Right ventricle myocardium superior (tissue), 1 donor: ENCODE measurements at regions of chr14 and their contacts with region 1.

Region 1: GRCh38 chr14:104985675-104986525 is at the start of gene CLBA1:
- DNase-seq: peak; percentile 93
- ATAC-seq: peak; percentile 99
- total RNA-seq, gene CLBA1: 1.5 TPM

Region 2: DNA sequence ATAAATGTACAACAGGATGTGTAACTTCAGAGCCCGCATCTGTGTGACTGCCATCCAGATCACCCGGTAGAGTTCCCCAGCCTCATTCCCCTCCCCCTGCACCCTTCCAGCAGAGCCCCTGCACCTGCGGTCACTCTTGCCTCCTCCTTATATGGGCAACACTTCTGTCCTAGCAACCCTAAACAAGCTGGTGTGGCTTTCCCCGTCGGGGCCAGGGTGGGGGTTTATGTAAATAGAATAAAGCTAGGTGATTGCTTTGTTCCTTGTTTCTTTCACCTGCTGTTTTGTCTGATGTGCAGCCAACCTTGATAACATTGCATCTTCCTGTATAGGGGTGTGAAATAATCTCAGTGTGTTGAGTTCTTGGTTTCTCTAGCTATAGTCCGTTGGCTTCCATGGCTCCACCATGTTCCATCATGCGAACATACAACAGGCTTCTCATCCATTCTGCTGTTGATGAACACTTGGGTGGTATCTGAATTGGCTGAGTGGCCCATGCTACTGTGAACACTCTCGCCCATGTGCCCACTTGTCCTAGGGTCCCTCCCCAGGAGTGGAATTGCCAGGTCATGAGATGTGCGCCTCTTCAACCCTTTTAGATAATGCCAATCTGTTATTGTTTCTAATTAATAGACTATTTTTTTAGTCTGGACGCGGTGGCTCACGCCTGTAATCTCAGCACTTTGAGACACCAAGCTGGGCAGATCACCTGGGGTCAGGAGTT is 745.3 kb before region 1 on chr14:
- intact Hi-C with region 1: no loop called
- DNase-seq: no peak
- ATAC-seq: no peak

Region 3: DNA sequence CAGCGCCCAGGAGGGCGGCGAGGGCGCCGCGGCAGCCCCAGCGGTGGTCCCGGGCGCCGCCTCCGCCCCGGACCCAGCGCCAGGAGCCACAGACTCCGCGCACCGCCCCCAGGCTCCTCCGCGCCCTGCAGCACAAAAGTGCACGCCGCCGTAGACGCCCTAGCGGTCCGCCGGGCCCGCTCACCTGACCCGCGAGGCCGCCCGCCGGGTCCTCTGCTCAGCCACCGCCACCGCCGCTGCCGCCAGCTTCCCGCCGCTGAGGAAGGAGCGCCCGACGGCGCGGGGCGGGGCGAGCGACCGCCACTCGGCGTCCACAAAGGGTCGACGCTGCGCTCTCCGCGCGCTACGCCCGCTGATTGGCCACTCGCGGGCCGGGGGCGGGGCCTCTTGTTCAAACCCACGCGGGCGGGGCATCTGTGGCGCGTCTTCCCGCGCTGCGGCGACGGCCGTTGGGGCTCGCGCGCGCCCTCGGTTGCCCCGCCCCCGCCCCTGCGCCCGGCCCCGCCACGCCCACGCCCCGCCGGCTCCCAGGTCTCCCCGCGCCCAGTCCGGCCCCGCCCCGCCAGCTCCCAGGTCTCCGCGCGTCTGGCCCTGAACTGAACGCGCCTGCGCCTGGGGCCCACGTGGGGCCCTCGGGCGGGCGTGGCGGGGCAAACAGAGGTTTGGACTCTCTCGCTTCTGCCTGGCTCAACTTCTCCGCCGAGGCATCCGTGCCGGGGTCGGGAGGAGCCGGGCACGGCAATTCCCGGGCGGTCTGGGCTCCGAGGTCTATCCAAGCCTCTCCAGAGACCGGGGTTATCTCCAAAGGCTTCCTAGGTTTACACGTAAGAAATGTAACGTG is 35.1 kb after region 1 on chr14 and contains the start of gene CDCA4:
- intact Hi-C with region 1: loop called (anchors 5 kb)
- DNase-seq: peak; percentile 98
- ATAC-seq: peak; percentile 98
- total RNA-seq, gene CDCA4: 1.6 TPM